ENCODE measurements at regions of chr19 and their contacts with region 1.

Region 1: GRCh38 chr19:39078436-39079200 is 5.5 kb upstream of the ACP7 start:
- DNase-seq: no peak
- ATAC-seq: no peak
- H3K4me3 ChIP-seq: no peak overlapping the region
- H3K4me3 Mint-ChIP-seq: no peak overlapping the region
- H3K27ac ChIP-seq: no peak overlapping the region
- H3K27ac Mint-ChIP-seq: no peak overlapping the region
- H3K4me1 ChIP-seq: peaks cover 15 to 17% of the 10 kb centered on the region in 2 donors
- H3K4me1 Mint-ChIP-seq: peaks cover 12 to 30% (median 20%) of the 10 kb centered on the region in 7 donors
- H3K27me3 ChIP-seq: peaks cover 12 to 13% of the 10 kb centered on the region in 2 donors
- H3K27me3 Mint-ChIP-seq: peaks cover 17 to 33% (median 25%) of the 10 kb centered on the region in 5 donors

Region 2: DNA sequence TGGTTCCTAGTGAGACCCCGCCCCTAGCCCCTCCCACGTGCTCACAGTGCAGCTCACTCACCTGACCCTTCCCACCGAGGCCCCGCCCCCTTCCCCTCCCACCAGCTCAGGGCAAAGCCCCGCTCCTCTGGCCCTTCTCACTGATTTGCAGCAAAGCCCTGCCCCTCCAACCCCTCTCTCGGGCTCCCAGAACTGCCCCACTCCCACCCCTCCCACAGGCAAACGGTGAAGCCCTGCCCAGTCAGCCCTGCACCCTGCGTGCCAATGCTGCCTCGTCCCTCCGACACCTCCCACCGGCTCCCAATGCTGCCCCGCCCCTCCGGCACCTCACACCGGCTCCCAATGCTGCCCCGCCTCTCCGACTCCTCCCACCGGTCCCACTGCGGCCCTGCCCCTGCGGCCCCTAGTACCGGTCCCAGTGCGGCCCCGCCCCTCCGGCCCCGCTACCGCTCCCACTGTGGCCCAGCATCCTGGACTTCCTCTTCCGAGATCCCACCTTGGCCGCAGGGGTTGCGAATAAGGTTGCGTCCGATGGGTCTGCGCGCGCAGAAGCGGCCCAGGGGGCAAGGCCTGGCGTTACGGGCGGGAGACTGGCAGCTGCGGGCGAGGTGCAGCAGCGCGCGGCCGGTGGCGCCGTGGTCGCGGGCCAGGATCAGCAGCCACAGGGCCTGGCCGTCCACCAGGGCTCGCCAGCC is 47.1 kb before region 1 on chr19:
- CTCF ChIA-PET with region 1: no interaction called
- POLR2A ChIA-PET with region 1: no interaction called
- intact Hi-C with region 1: loop called in 1 of 2 experiments (anchors 2 kb)
- DNase-seq: peak; percentile 25 to 71 (median 39)
- ATAC-seq: peak; percentile 84
- H3K4me3 ChIP-seq: peak overlapping the region; percentile 51
- H3K4me3 Mint-ChIP-seq: peak overlapping the region; percentile 39 to 88 (median 66)
- H3K27ac ChIP-seq: no peak overlapping the region
- H3K27ac Mint-ChIP-seq: peak overlapping the region in 1 of 9 donors; percentile 59
- H3K4me1 ChIP-seq: peaks cover 7 to 11% of the 10 kb centered on the region in 2 donors
- H3K4me1 Mint-ChIP-seq: peaks cover 0 to 10% (median 6%) of the 10 kb centered on the region in 7 donors
- H3K27me3 ChIP-seq: peaks cover 0 to 4% of the 10 kb centered on the region in 2 donors
- H3K27me3 Mint-ChIP-seq: peaks cover 0 to 43% (median 5%) of the 10 kb centered on the region in 5 donors

Region 3: DNA sequence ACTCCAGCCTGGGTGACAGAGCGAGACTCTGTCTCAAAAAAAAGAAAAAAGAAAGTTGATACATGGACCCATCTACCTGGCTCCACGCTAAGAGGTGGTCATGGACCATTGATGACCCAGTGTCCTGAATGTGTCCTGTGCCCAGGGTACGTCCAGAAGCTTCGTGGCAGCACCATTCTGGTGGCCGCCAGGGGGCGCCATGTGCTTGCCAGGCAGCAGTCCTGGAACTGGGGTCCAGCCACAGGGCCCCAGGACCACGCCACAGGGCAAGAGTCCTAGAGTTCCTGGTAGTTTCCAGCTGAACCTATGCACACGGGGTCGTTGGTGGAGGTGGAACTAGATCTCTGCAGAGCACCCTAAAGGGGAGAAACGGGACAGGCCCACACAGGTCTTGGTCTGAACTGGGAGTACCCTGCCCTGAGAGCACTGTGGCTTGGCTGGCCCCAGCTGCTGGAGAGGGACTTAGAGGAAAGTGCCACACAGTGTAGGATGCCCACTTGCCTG is 26.3 kb before region 1 on chr19:
- CTCF ChIA-PET with region 1: interaction called, 4 read pairs
- POLR2A ChIA-PET with region 1: no interaction called
- intact Hi-C with region 1: loop called in 1 of 2 experiments (anchors 1 kb)
- DNase-seq: peak; percentile 38 to 73 (median 57)
- ATAC-seq: peak; percentile 63
- H3K4me3 ChIP-seq: no peak overlapping the region
- H3K4me3 Mint-ChIP-seq: no peak overlapping the region
- H3K27ac ChIP-seq: no peak overlapping the region
- H3K27ac Mint-ChIP-seq: no peak overlapping the region
- H3K4me1 ChIP-seq: no peaks in the 10 kb centered on the region
- H3K4me1 Mint-ChIP-seq: no peaks in the 10 kb centered on the region
- H3K27me3 ChIP-seq: no peaks in the 10 kb centered on the region
- H3K27me3 Mint-ChIP-seq: peaks cover 0 to 3% (median 0%) of the 10 kb centered on the region in 5 donors

Region 4: GRCh38 chr19:39110263-39110967 is 31.8 kb after region 1 on chr19:
- CTCF ChIA-PET with region 1: interaction called, 5 read pairs
- POLR2A ChIA-PET with region 1: no interaction called
- intact Hi-C with region 1: loop called in 1 of 2 experiments (anchors 1 kb)
- DNase-seq: peak; percentile 33 to 73 (median 57)
- ATAC-seq: peak; percentile 88
- H3K4me3 ChIP-seq: no peak overlapping the region
- H3K4me3 Mint-ChIP-seq: no peak overlapping the region
- H3K27ac ChIP-seq: no peak overlapping the region
- H3K27ac Mint-ChIP-seq: peak overlapping the region in 1 of 9 donors; percentile 72
- H3K4me1 ChIP-seq: no peaks in the 10 kb centered on the region
- H3K4me1 Mint-ChIP-seq: peaks cover 0 to 7% (median 5%) of the 10 kb centered on the region in 7 donors
- H3K27me3 ChIP-seq: no peaks in the 10 kb centered on the region
- H3K27me3 Mint-ChIP-seq: peaks cover 0 to 16% (median 0%) of the 10 kb centered on the region in 5 donors

Region 5: GRCh38 chr19:39406656-39407393 is 328.2 kb after region 1 on chr19 and contains the start of gene ZFP36:
- CTCF ChIA-PET with region 1: no interaction called
- POLR2A ChIA-PET with region 1: no interaction called
- intact Hi-C with region 1: loop called in 1 of 2 experiments (anchors 1 kb)
- DNase-seq: peak; percentile 82 to 91 (median 86)
- ATAC-seq: peak; percentile 51
- H3K4me3 ChIP-seq: peak within 1 kb of the TSS; percentile 100
- H3K4me3 Mint-ChIP-seq: peak within 1 kb of the TSS; percentile 89 to 99 (median 94)
- H3K27ac ChIP-seq: peak within 1 kb of the TSS; percentile 100
- H3K27ac Mint-ChIP-seq: peak within 1 kb of the TSS; percentile 96 to 99 (median 99)
- H3K4me1 ChIP-seq: peaks cover 41 to 52% of the 10 kb centered on the region in 2 donors
- H3K4me1 Mint-ChIP-seq: peaks cover 28 to 67% (median 48%) of the 10 kb centered on the region in 7 donors
- H3K27me3 ChIP-seq: no peaks in the 10 kb centered on the region
- H3K27me3 Mint-ChIP-seq: peaks cover 0 to 3% (median 0%) of the 10 kb centered on the region in 5 donors
- total RNA-seq, gene ZFP36: 72.1 to 1,250 (median 187) TPM

Measured in naive thymus-derived CD4-positive, alpha-beta T cell (primary cell).